Dorsolateral prefrontal cortex (tissue), 120 donors: ENCODE measurements at regions of chr12 and their contacts with region 1.

Region 1: GRCh38 chr12:92928962-92929915 is at the start of gene EEA1:
- DNase-seq: peak; percentile 96 to 99 (median 98)
- H3K4me3 ChIP-seq: peak within 1 kb of the TSS; percentile 64 to 98 (median 83)
- H3K27ac ChIP-seq: peak within 1 kb of the TSS; percentile 86 to 99 (median 95)
- H3K27me3 ChIP-seq: no peaks in the 10 kb centered on the region
- CTCF ChIP-seq: peak in 46 of 56 donors; percentile 4 to 69 (median 43)
- total RNA-seq, gene EEA1: 21.0 to 52.8 (median 39.1) TPM

Region 2: GRCh38 chr12:92784795-92785562 is 144.3 kb before region 1 on chr12:
- intact Hi-C with region 1: loop called (anchors 5 kb)
- DNase-seq: peak in 1 of 10 donors; percentile 22
- H3K4me3 ChIP-seq: no peak overlapping the region
- H3K27ac ChIP-seq: peak overlapping the region in 2 of 59 donors; percentile 6 to 7
- H3K27me3 ChIP-seq: no peaks in the 10 kb centered on the region
- CTCF ChIP-seq: peak in 55 of 56 donors; percentile 30 to 78 (median 56)

Region 3: DNA sequence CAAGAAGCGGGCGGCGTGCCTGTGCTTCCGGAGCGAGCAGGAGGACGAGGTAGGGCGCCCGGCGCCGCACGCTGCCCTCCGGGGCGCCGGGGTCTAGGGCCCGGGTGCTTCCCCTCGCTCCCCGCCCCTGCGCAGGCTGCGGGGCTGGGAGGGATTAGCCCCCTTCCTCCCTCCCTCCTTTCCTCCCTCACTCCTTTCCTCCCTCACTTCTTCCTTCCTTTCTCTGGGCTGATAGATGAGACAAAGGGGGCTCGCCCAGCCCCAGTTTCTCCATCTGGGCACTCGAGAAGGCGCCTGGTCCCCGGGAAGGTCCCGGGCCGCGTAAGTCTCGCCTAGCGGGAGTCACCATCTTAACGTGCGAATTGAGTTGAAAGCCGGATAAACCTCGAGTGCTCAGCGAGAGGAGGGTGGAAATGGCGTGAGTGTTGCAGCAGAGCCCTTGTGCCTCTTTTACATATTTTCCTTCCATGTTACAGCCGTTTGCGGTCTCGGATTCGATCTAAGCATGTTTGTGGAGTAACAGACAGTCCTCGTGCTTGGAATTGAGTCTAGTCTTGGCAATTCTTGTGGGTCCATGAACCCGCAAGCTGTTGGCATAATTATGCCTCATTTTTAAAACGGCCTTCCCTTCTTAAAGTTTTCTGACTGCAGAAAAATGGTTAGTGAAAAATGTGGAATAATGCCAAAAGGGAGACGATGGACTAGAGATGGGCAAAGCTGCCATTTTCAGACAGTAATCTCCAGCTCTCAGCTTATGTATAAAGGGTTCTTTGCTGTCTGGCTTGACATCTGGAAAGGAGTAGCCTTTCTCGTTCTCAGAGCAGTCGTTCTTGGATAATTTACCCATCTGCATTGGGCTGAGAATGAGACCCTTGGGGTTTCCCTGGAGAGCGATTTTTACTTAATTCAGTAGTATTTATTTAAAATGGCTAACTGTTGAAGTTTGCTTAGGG is 449.4 kb after region 1 on chr12:
- intact Hi-C with region 1: loop called in 1 of 2 experiments (anchors 5 kb)
- DNase-seq: peak in 2 of 10 donors; percentile 21 to 23
- H3K4me3 ChIP-seq: peak overlapping the region; percentile 65 to 98 (median 87)
- H3K27ac ChIP-seq: peak overlapping the region; percentile 29 to 97 (median 91)
- H3K27me3 ChIP-seq: no peaks in the 10 kb centered on the region
- CTCF ChIP-seq: no peak

Region 4: GRCh38 chr12:93397412-93397811 is 468.2 kb after region 1 on chr12:
- intact Hi-C with region 1: loop called in 1 of 2 experiments (anchors 5 kb)
- DNase-seq: no peak
- H3K4me3 ChIP-seq: no peak overlapping the region
- H3K27ac ChIP-seq: peak overlapping the region in 4 of 59 donors; percentile 10 to 60 (median 45)
- H3K27me3 ChIP-seq: no peaks in the 10 kb centered on the region
- CTCF ChIP-seq: no peak

Region 5: DNA sequence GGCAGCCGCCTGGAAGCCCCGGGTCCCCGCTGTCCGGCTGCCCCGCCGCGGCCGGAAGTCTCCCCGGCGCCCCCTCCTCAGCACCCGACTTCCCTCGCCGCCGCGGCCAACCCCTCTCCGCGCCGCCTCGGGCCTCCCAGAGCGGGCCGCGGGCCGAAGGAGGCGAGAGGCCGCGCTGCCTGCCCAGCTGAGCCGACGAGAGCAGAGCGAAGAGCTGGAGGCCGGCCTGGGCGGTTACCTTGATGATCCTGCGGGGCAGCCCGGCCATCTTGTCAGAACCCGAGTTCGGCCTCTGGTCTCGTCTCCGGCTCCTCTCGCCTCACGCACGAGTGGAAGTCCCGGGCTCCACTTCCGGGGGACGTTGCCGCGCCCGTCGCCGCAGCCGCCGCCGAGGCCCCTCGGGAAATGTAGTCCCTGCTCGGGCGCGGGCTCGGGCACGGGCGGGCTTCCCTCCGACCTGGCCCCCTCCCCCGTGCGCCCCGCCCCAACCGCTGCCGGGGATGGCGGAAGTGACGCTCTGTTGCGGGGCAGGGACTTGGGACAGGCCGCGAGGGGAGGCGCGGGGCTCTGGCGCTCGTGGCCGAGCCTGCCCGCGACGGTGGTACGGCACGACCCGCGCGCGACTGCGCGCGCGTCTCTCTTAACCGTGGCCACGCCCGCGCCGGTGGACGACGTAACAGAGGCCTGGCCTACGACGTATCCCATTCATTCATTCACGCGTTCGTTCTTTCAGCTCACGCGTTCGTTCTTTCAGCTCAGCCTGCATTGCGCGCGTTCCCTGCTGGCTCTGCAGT is 512.6 kb after region 1 on chr12 and contains the start of gene UBE2N:
- intact Hi-C with region 1: loop called in 1 of 2 experiments (anchors 5 kb)
- DNase-seq: peak; percentile 93 to 99 (median 96)
- H3K4me3 ChIP-seq: peak within 1 kb of the TSS; percentile 68 to 100 (median 94)
- H3K27ac ChIP-seq: peak within 1 kb of the TSS; percentile 64 to 97 (median 89)
- H3K27me3 ChIP-seq: no peaks in the 10 kb centered on the region
- CTCF ChIP-seq: peak in 29 of 56 donors; percentile 5 to 58 (median 22)
- total RNA-seq, gene UBE2N: 71.0 to 192 (median 134) TPM